ENCODE measurements at regions of chr2 and their contacts with region 1.

Region 1: GRCh38 chr2:20595431-20596192 is 55.3 kb downstream of the HS1BP3 start:
- DNase-seq: peak in 1 of 2 experiments; percentile 32
- H3K4me3 ChIP-seq: no peak overlapping the region
- H3K4me3 Mint-ChIP-seq: no peak overlapping the region
- H3K27ac Mint-ChIP-seq: peak overlapping the region; percentile 74
- H3K4me1 ChIP-seq: peaks cover 60% of the 10 kb centered on the region
- H3K4me1 Mint-ChIP-seq: peaks cover 33% of the 10 kb centered on the region
- H3K27me3 ChIP-seq: no peaks in the 10 kb centered on the region
- H3K27me3 Mint-ChIP-seq: no peaks in the 10 kb centered on the region
- CTCF ChIP-seq: no peak

Region 2: DNA sequence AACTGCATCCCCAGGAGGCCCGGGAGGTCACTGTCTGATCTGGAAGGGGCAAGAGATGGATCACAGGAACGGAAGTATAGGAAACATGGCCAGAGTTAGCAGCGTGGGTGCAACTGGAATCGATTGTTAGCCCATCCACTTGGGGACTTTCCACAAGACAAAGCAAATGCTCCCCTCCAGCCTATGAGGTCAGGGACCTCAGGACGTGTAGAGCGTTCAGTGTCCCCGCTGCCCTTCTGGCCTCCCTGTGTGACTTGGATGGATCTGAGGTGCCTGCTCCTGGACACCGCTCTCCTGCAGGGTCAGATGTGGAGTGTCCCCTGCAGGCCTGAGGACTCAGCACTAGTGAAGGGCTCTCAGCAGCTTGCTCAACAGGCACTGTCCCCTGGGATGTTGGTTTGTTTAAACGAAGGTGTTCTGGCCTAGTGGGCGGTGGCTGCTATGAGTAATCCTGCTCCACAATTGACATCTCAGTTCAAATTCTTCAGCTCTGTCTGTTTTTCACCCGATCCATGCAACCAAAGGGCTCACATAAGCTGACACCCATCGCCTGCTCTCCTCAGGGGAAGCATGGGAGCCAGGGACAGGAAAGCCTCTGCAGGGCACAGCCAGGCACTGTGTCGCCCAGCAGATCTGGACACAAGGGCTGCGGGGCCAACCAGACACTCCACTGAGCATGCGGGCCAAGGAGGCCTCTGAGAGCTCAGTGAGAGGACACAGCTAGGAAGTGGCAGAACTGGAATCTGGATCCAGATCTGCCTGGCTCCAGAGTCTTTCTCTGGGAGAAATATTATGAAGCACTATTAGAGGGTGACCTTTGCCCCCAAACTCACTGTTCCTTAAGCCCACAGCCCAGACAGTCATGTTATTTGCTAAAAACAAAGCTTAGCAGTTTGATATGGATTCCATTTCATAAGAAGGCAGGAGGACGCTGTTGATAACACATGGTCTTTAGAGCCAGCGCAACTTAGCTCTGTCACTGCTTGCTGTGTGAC is 70.3 kb before region 1 on chr2:
- CTCF ChIA-PET with region 1: interaction called, 4 read pairs
- POLR2A ChIA-PET with region 1: no interaction called
- intact Hi-C with region 1: loop called (anchors 5 kb)
- DNase-seq: peak; percentile 59 to 66
- H3K4me3 ChIP-seq: no peak overlapping the region
- H3K4me3 Mint-ChIP-seq: no peak overlapping the region
- H3K27ac Mint-ChIP-seq: no peak overlapping the region
- H3K4me1 ChIP-seq: peaks cover 14% of the 10 kb centered on the region
- H3K4me1 Mint-ChIP-seq: peaks cover 16% of the 10 kb centered on the region
- H3K27me3 ChIP-seq: no peaks in the 10 kb centered on the region
- H3K27me3 Mint-ChIP-seq: no peaks in the 10 kb centered on the region
- CTCF ChIP-seq: peak in 1 of 2 experiments; percentile 29

Region 3: GRCh38 chr2:20567159-20567925 is 28.3 kb before region 1 on chr2:
- CTCF ChIA-PET with region 1: interaction called, 3 read pairs
- POLR2A ChIA-PET with region 1: no interaction called
- intact Hi-C with region 1: loop called (anchors 1 kb)
- DNase-seq: peak; percentile 38 to 60
- H3K4me3 ChIP-seq: no peak overlapping the region
- H3K4me3 Mint-ChIP-seq: no peak overlapping the region
- H3K27ac Mint-ChIP-seq: peak overlapping the region; percentile 89
- H3K4me1 ChIP-seq: peaks cover 13% of the 10 kb centered on the region
- H3K4me1 Mint-ChIP-seq: peaks cover 26% of the 10 kb centered on the region
- H3K27me3 ChIP-seq: no peaks in the 10 kb centered on the region
- H3K27me3 Mint-ChIP-seq: no peaks in the 10 kb centered on the region
- CTCF ChIP-seq: no peak

Region 4: GRCh38 chr2:20578895-20579825 is 16.5 kb before region 1 on chr2:
- CTCF ChIA-PET with region 1: no interaction called
- POLR2A ChIA-PET with region 1: interaction called, 6 read pairs
- intact Hi-C with region 1: loop called (anchors 1 kb)
- DNase-seq: peak; percentile 65 to 84
- H3K4me3 ChIP-seq: no peak overlapping the region
- H3K4me3 Mint-ChIP-seq: no peak overlapping the region
- H3K27ac Mint-ChIP-seq: peak overlapping the region; percentile 85
- H3K4me1 ChIP-seq: peaks cover 53% of the 10 kb centered on the region
- H3K4me1 Mint-ChIP-seq: peaks cover 40% of the 10 kb centered on the region
- H3K27me3 ChIP-seq: no peaks in the 10 kb centered on the region
- H3K27me3 Mint-ChIP-seq: no peaks in the 10 kb centered on the region
- CTCF ChIP-seq: no peak

Region 5: DNA sequence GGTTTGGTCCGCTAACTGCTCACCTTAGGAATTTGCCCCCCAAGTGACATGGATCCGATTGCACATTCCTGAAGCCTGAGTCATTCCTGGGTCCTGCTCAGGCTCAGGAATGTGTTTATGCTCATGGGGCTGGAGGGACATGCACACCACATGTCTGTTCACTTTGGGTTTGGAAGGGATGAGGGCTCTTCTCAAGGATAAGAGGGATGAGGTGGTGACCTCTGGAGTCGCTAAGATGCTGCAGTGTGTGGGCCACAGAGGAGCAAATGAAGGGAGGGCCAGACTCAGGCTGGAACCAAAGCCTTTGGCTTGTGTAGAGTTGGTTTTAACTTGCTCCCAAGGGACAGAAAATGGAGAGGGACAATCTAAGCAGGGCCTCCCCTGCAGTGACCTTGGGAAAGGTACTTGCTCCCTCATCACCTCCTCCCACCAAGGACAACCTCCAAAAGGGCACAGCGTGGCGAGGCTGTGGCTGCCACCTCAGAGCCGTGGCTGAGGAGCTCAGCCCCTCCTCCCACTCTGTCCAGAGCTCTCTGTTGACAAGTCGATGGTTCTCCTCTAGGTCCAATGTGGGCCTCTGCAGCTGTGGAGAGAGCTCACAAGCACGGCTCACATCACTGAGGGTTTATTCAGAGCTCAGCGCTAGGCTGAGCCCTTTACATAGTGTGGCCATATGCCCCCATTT is 10.8 kb before region 1 on chr2:
- CTCF ChIA-PET with region 1: no interaction called
- POLR2A ChIA-PET with region 1: interaction called, 6 read pairs
- intact Hi-C with region 1: loop called (anchors 1 kb)
- DNase-seq: peak; percentile 85 to 92
- H3K4me3 ChIP-seq: no peak overlapping the region
- H3K4me3 Mint-ChIP-seq: peak overlapping the region; percentile 32
- H3K27ac Mint-ChIP-seq: peak overlapping the region; percentile 89
- H3K4me1 ChIP-seq: peaks cover 54% of the 10 kb centered on the region
- H3K4me1 Mint-ChIP-seq: peaks cover 43% of the 10 kb centered on the region
- H3K27me3 ChIP-seq: no peaks in the 10 kb centered on the region
- H3K27me3 Mint-ChIP-seq: no peaks in the 10 kb centered on the region
- CTCF ChIP-seq: no peak

Region 6: DNA sequence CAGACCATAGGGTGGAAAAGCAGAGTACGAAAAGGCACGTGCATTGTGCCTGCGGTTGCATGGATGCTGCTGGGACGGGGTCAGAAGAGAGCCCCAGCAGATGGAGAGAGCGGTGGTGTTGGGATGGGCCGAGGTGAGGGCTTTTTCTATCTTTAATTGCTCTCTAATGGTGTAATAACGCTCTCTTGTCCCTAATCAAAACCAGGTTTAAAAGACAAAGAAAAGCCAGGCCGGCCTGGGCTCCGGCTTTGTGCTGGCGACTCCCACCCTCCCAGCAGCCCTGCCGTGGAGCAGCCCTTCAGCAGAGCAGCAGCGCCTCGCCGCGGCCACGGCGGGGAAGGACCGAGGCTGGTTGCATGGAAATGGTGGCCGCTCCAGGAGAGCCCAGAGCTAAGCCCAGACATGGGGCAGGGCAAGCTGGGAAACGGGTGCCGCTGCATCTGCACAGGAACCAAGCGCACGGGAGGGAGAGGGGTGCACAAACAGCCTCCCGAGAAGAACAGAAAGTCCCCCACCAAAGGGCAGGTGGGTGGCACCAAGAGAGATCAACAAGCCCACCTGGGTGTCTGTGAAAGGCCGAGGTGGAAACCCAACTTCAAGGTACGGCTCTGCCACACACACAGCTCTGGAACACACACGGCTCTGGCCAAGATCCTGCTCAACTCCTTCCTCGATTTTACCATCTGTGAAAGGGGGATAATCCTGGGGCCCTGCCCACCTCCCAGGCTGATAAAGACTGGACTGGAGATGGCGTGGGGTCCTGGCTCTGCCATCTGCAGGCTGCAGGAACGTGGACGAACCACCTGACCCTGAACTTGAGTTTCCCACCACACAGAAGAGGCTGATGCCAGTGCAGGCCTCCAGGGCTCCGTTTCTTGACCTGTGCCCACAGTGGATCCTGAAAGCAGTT is 40.3 kb after region 1 on chr2:
- CTCF ChIA-PET with region 1: no interaction called
- POLR2A ChIA-PET with region 1: no interaction called
- intact Hi-C with region 1: loop called (anchors 2 kb)
- DNase-seq: peak; percentile 61 to 77
- H3K4me3 ChIP-seq: no peak overlapping the region
- H3K4me3 Mint-ChIP-seq: no peak overlapping the region
- H3K27ac Mint-ChIP-seq: no peak overlapping the region
- H3K4me1 ChIP-seq: no peaks in the 10 kb centered on the region
- H3K4me1 Mint-ChIP-seq: no peaks in the 10 kb centered on the region
- H3K27me3 ChIP-seq: no peaks in the 10 kb centered on the region
- H3K27me3 Mint-ChIP-seq: no peaks in the 10 kb centered on the region
- CTCF ChIP-seq: peak; percentile 57 to 78